ENCODE measurements at regions of chr10 and their contacts with region 1.

Region 1: DNA sequence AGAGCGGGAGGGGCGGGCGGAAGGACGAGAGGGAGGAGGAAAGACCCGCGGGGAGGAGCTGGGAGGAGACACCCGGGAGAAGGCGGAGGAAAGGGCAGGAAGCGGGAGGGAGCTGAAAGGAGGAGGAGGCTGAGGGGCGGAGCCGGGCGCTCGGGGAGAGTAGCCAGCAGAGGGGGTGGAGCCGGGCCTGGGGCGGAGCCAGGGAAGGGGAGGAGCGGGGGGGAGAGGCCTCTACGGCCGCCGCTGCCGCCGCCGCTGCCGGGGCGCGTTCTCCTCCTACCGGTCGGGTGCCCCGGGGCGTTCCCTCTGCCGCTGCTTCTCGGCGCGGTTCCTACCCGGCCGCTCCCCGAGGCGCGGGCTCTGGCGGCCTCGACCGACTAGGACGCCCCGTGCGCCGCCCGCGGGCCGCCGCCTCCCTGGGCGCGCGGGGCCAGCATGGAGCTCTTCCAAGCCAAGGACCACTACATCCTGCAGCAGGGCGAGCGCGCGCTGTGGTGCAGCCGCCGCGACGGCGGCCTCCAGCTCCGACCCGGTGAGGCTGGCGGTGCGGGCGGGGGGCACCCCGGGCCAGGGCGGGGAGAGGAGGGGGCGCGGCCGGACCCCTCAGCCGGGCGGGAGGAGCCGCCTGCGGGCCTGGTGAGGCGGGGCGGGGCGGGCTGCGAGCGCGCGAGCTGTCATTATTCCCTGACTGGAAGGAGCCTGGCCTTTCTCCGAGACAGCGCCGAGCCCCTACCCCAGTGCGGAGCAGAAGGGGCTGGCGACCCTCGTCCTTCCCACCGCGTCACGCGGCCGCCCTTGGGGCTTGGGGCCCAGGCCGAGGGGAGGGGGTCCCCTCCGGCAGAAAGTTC is at the start of gene INPP5F:
- DNase-seq: peak; percentile 98
- H3K4me3 Mint-ChIP-seq: peak within 1 kb of the TSS; percentile 93
- H3K27ac Mint-ChIP-seq: peak within 1 kb of the TSS; percentile 81
- H3K4me1 Mint-ChIP-seq: peaks cover 39% of the 10 kb centered on the region
- H3K27me3 Mint-ChIP-seq: no peaks in the 10 kb centered on the region
- total RNA-seq, gene INPP5F: 17.7 and 19.4 TPM in 2 replicates

Region 2: GRCh38 chr10:119103903-119104652 is 622.0 kb before region 1 on chr10 and contains the start of gene DENND10:
- intact Hi-C with region 1: loop called (anchors 1 kb)
- DNase-seq: peak; percentile 68
- H3K4me3 Mint-ChIP-seq: peak within 1 kb of the TSS; percentile 87
- H3K27ac Mint-ChIP-seq: peak within 1 kb of the TSS; percentile 58
- H3K4me1 Mint-ChIP-seq: peaks cover 22% of the 10 kb centered on the region
- H3K27me3 Mint-ChIP-seq: no peaks in the 10 kb centered on the region
- total RNA-seq, gene DENND10: 20.1 and 25.4 TPM in 2 replicates

Region 3: DNA sequence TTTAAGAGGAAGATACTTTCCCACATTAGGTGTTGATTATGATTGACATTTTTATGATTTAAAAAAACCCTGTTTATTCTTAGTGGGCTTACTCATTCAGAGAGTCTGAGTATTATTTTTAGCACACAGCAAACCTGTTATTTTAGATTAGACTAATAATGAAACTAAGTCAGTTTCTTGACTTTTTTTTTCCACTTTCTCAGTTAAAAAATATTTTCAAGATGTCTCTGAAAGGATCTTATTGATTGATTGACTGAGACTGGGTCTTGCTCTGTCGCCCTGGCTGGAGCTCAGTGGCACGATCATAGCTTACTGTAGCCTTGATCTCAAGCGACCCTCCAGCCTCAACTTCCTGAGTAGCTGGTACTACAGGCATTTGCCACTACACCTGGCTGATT is 20.6 kb before region 1 on chr10:
- intact Hi-C with region 1: loop called (anchors 1 kb)
- DNase-seq: no peak
- H3K4me3 Mint-ChIP-seq: peak overlapping the region; percentile 74
- H3K27ac Mint-ChIP-seq: peak overlapping the region; percentile 99
- H3K4me1 Mint-ChIP-seq: peaks cover 82% of the 10 kb centered on the region
- H3K27me3 Mint-ChIP-seq: peaks cover 2% of the 10 kb centered on the region

Region 4: GRCh38 chr10:119750391-119751230 is 24.6 kb after region 1 on chr10:
- intact Hi-C with region 1: no loop called
- DNase-seq: peak; percentile 39
- H3K4me3 Mint-ChIP-seq: no peak overlapping the region
- H3K27ac Mint-ChIP-seq: no peak overlapping the region
- H3K4me1 Mint-ChIP-seq: peaks cover 7% of the 10 kb centered on the region
- H3K27me3 Mint-ChIP-seq: no peaks in the 10 kb centered on the region

Region 5: GRCh38 chr10:119892188-119893065 is 166.4 kb after region 1 on chr10 and contains the start of gene SEC23IP:
- intact Hi-C with region 1: loop called (anchors 1 kb)
- DNase-seq: peak; percentile 92
- H3K4me3 Mint-ChIP-seq: peak within 1 kb of the TSS; percentile 92
- H3K27ac Mint-ChIP-seq: peak within 1 kb of the TSS; percentile 96
- H3K4me1 Mint-ChIP-seq: peaks cover 53% of the 10 kb centered on the region
- H3K27me3 Mint-ChIP-seq: peaks cover 4% of the 10 kb centered on the region
- total RNA-seq, gene SEC23IP: 79.7 and 91.7 TPM in 2 replicates

Region 6: GRCh38 chr10:120077707-120078492 is 351.8 kb after region 1 on chr10:
- intact Hi-C with region 1: no loop called
- DNase-seq: no peak
- H3K4me3 Mint-ChIP-seq: no peak overlapping the region
- H3K27ac Mint-ChIP-seq: no peak overlapping the region
- H3K4me1 Mint-ChIP-seq: no peaks in the 10 kb centered on the region
- H3K27me3 Mint-ChIP-seq: peaks cover 2% of the 10 kb centered on the region